ENCODE measurements at regions of chr1 and their contacts with region 1.

Region 1: GRCh38 chr1:201792534-201793305 is 36.2 kb upstream of the IPO9 start:
- DNase-seq: peak; percentile 85
- ATAC-seq: peak; percentile 96
- H3K4me3 Mint-ChIP-seq: no peak overlapping the region
- H3K27ac Mint-ChIP-seq: no peak overlapping the region
- H3K4me1 Mint-ChIP-seq: no peaks in the 10 kb centered on the region
- H3K27me3 Mint-ChIP-seq: no peaks in the 10 kb centered on the region
- CTCF ChIP-seq: peak; percentile 82

Region 2: GRCh38 chr1:201447911-201448871 is 344.5 kb before region 1 on chr1:
- CTCF ChIA-PET with region 1: interaction called, 11 read pairs
- POLR2A ChIA-PET with region 1: no interaction called
- DNase-seq: peak; percentile 83
- ATAC-seq: peak; percentile 89
- H3K4me3 Mint-ChIP-seq: no peak overlapping the region
- H3K27ac Mint-ChIP-seq: no peak overlapping the region
- H3K4me1 Mint-ChIP-seq: peaks cover 35% of the 10 kb centered on the region
- H3K27me3 Mint-ChIP-seq: peaks cover 3% of the 10 kb centered on the region; the same call in 1 of the 2 replicates
- CTCF ChIP-seq: peak; percentile 80

Region 3: GRCh38 chr1:201545851-201546492 is 246.7 kb before region 1 on chr1:
- CTCF ChIA-PET with region 1: interaction called, 11 read pairs
- POLR2A ChIA-PET with region 1: no interaction called
- DNase-seq: no peak
- ATAC-seq: peak; percentile 95
- H3K4me3 Mint-ChIP-seq: no peak overlapping the region
- H3K27ac Mint-ChIP-seq: 0 out of 2 replicates have a peak overlapping the region, but pooled peaks have one; percentile 85
- H3K4me1 Mint-ChIP-seq: peaks cover 20% of the 10 kb centered on the region
- H3K27me3 Mint-ChIP-seq: peaks cover 19% of the 10 kb centered on the region
- CTCF ChIP-seq: no peak

Region 4: DNA sequence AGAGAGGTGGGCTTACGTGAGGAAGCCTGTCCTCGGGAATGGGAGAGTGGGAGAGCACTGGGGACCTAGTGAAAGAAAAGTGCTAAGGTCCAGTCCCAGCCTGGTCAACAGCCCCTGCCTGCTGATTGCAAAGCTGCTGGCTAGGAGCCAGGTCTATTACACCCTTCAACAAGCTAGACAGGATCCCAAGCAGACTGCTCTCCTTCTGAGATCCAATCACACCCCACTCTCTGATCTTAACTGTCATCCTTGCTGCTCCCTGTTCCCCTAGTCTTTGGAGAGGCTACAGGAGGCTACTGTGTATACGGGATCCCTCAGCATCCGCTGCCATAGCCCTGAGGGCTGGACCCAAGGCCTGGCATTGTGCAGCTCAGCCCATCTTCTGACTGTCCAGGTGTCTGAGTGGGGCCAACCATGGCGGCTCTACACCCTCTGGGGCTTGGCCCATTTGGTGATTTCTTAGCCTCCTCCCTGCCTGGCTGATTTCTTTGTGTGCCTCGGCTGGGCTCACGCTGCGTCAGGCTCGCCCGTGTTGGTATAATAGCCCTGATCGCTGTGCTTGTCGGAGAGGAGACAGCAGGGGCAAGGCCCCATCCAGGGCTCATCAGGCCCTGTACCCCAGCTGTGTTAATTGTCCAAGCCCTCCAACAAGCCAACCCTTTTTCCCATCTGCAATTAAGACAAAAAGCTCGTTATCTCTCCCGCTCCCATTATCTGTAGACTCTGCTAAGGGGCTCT is 209.8 kb before region 1 on chr1:
- CTCF ChIA-PET with region 1: interaction called, 12 read pairs
- POLR2A ChIA-PET with region 1: no interaction called
- DNase-seq: no peak
- ATAC-seq: peak; percentile 28
- H3K4me3 Mint-ChIP-seq: no peak overlapping the region
- H3K27ac Mint-ChIP-seq: no peak overlapping the region
- H3K4me1 Mint-ChIP-seq: peaks cover 19% of the 10 kb centered on the region
- H3K27me3 Mint-ChIP-seq: peaks cover 4% of the 10 kb centered on the region; the same call in 1 of the 2 replicates
- CTCF ChIP-seq: no peak

Region 5: DNA sequence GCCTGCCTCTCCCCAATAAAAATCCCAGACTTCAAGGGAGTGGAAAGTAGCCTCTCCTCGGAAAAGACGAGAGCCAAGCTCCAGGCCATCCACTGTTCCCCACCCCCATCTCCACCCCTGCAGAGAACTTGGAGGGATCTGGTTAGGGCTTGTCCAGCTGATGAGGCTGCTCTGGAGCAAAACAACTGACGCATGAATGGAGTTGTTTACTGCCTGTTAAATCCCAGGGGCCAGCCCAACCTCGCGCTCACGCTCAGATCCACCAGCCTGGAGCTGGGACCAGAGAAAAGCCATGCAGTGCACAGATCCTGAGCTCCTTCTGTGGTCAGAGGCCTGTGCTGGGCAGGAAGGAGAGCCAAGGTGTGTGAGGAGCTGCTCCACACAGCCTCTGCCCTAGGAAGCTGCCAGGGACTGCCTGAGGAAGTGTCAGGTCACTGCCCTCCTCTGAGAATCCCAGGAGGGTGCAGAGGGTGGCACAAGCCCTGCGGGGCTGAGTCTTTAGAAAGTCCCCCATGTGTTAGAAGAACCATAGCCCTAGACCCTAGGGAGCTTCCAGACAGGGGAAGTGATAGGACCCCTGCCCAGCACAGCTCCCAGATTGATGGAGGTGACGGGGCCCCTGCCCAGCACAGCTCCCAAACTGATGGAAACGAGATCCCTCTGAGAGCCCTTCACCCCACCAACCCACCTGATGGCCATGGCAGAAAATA is 72.8 kb before region 1 on chr1:
- CTCF ChIA-PET with region 1: interaction called, 378 read pairs
- POLR2A ChIA-PET with region 1: no interaction called
- DNase-seq: no peak
- ATAC-seq: no peak; the same call in 1 of the 2 replicates
- H3K4me3 Mint-ChIP-seq: no peak overlapping the region
- H3K27ac Mint-ChIP-seq: peak overlapping the region; percentile 90
- H3K4me1 Mint-ChIP-seq: peaks cover 36% of the 10 kb centered on the region
- H3K27me3 Mint-ChIP-seq: no peaks in the 10 kb centered on the region
- CTCF ChIP-seq: no peak

Region 6: GRCh38 chr1:201751872-201752271 is 40.8 kb before region 1 on chr1:
- CTCF ChIA-PET with region 1: interaction called, 133 read pairs
- POLR2A ChIA-PET with region 1: no interaction called
- DNase-seq: no peak
- ATAC-seq: peak; percentile 39
- H3K4me3 Mint-ChIP-seq: no peak overlapping the region
- H3K27ac Mint-ChIP-seq: peak overlapping the region; percentile 33; the same call in 1 of the 2 replicates
- H3K4me1 Mint-ChIP-seq: peaks cover 74% of the 10 kb centered on the region
- H3K27me3 Mint-ChIP-seq: no peaks in the 10 kb centered on the region
- CTCF ChIP-seq: no peak

Region 7: DNA sequence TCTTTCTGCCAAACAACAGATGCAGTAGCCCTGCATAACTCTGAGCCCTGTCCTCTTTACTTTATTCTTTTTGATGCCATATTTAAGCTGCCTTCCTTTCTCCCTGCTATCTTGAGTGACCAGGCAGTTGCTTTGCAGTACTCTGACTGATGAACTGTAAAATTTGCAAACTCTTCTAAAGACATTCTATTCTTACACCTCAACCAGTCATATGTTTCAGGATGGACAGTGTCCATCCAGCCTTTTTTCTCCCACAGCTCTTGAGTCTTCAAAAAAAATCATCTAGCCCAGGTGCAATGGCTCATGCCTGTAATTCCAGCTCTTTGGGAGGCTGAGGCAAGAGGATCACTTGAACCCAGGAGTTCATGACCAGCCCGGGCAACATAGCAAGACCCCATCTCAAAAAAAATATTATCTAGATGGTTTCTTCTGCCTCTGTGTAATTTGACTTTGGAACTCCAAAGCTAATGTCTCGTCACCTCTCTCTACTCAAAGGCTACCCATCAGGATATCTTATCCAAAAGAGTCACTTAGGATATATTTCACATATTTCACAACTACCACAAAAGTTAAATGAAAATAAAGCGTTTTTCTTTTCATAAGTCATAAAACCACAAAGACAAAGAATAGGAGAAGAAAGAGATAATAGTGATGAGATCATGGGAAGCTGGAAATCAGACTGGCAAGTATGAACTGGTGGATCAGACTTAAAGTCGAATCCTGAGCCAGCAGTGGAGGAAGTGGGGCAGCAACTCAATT is 18.3 kb before region 1 on chr1:
- CTCF ChIA-PET with region 1: interaction called, 20 read pairs
- POLR2A ChIA-PET with region 1: no interaction called
- DNase-seq: no peak
- ATAC-seq: no peak
- H3K4me3 Mint-ChIP-seq: no peak overlapping the region
- H3K27ac Mint-ChIP-seq: no peak overlapping the region
- H3K4me1 Mint-ChIP-seq: no peaks in the 10 kb centered on the region
- H3K27me3 Mint-ChIP-seq: no peaks in the 10 kb centered on the region
- CTCF ChIP-seq: no peak

Region 8: GRCh38 chr1:201925981-201926645 is 133.4 kb after region 1 on chr1:
- CTCF ChIA-PET with region 1: no interaction called
- POLR2A ChIA-PET with region 1: no interaction called
- DNase-seq: no peak
- ATAC-seq: no peak
- H3K4me3 Mint-ChIP-seq: no peak overlapping the region
- H3K27ac Mint-ChIP-seq: no peak overlapping the region
- H3K4me1 Mint-ChIP-seq: no peaks in the 10 kb centered on the region
- H3K27me3 Mint-ChIP-seq: no peaks in the 10 kb centered on the region
- CTCF ChIP-seq: no peak